ENCODE measurements at regions of chr19 and their contacts with region 1.

Region 1: GRCh38 chr19:7674010-7675005 is 2.6 kb upstream of the MCEMP1 start:
- DNase-seq: peak; percentile 94 to 97 (median 96)
- H3K4me3 ChIP-seq: no peak overlapping the region
- H3K4me3 Mint-ChIP-seq: peak overlapping the region; percentile 26 to 34
- H3K27ac ChIP-seq: peak overlapping the region; percentile 67 to 81
- H3K27ac Mint-ChIP-seq: peak overlapping the region; percentile 70 to 98 (median 93)
- H3K4me1 ChIP-seq: peaks cover 69 to 85% of the 10 kb centered on the region in 2 donors
- H3K4me1 Mint-ChIP-seq: peaks cover 78% of the 10 kb centered on the region
- H3K27me3 ChIP-seq: no peaks in the 10 kb centered on the region
- H3K27me3 Mint-ChIP-seq: peaks cover 0 to 4% (median 0%) of the 10 kb centered on the region in 3 donors
- CTCF ChIP-seq: no peak

Region 2: GRCh38 chr19:7595466-7596133 is 78.7 kb before region 1 on chr19 and contains the start of gene CAMSAP3:
- intact Hi-C with region 1: no loop called
- DNase-seq: no peak
- H3K4me3 ChIP-seq: peak within 1 kb of the TSS in 1 of 3 experiments; percentile 60
- H3K4me3 Mint-ChIP-seq: peak within 1 kb of the TSS; percentile 71 to 82
- H3K27ac ChIP-seq: no peak within 1 kb of the TSS
- H3K27ac Mint-ChIP-seq: peak within 1 kb of the TSS in 1 of 7 donors; percentile 9
- H3K4me1 ChIP-seq: peaks cover 4 to 6% of the 10 kb centered on the region in 2 donors
- H3K4me1 Mint-ChIP-seq: peaks cover 6% of the 10 kb centered on the region
- H3K27me3 ChIP-seq: peaks cover 33 to 51% of the 10 kb centered on the region in 2 donors
- H3K27me3 Mint-ChIP-seq: peaks cover 54 to 66% (median 63%) of the 10 kb centered on the region in 3 donors
- CTCF ChIP-seq: no peak
- polyA plus RNA-seq, gene CAMSAP3: 0.05 TPM in 1 of 3 donors, not detected in the others

Region 3: DNA sequence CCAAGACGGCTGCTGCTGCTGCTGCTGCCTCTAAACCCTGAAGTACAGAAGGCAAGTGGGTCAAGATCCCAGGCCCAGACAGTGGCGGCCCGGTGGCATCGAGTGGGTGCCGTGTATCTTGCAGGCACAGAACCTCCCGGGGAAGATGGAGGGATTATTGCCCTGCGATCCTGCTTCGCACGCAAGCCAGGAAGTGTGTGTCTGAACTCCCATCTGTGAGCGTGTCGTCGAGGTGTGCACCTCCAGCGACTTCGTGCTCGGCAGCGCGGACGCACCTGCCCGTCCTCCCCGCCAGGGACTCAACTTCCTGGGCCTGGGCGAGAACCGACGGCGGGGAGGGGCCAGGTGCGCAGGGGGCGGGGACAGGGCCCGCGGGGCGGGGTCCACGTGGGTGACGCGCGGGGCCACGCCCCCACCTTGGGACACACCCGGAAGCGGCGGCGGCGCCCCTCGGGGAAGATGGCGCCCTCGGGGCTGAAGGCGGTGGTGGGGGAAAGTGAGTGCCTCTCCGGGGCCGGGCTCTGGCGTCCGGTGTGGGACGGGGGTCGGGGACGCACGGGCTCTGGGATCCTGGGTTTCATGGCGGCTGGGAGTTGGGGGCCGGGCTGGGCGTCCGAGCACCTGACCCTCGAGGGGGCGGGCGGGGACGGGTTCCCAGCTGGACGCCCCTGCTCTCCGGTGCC is 37.5 kb before region 1 on chr19 and contains the start of gene STXBP2:
- intact Hi-C with region 1: loop called in 1 of 2 experiments (anchors 5 kb)
- DNase-seq: peak; percentile 73 to 81 (median 74)
- H3K4me3 ChIP-seq: peak within 1 kb of the TSS; percentile 56 to 99 (median 90)
- H3K4me3 Mint-ChIP-seq: peak within 1 kb of the TSS; percentile 89 to 92
- H3K27ac ChIP-seq: peak within 1 kb of the TSS; percentile 96 to 100
- H3K27ac Mint-ChIP-seq: peak within 1 kb of the TSS; percentile 94 to 98 (median 95)
- H3K4me1 ChIP-seq: peaks cover 33 to 42% of the 10 kb centered on the region in 2 donors
- H3K4me1 Mint-ChIP-seq: peaks cover 46% of the 10 kb centered on the region
- H3K27me3 ChIP-seq: no peaks in the 10 kb centered on the region
- H3K27me3 Mint-ChIP-seq: peaks cover 0 to 3% (median 2%) of the 10 kb centered on the region in 3 donors
- CTCF ChIP-seq: no peak
- polyA plus RNA-seq, gene STXBP2: 249 to 846 (median 327) TPM

Region 4: GRCh38 chr19:7658219-7658686 is 16.1 kb before region 1 on chr19:
- intact Hi-C with region 1: loop called (anchors 1 to 2 kb)
- DNase-seq: peak; percentile 72 to 87 (median 82)
- H3K4me3 ChIP-seq: peak overlapping the region in 2 of 3 experiments; percentile 16 to 61
- H3K4me3 Mint-ChIP-seq: peak overlapping the region; percentile 67 to 73
- H3K27ac ChIP-seq: peak overlapping the region; percentile 99 to 100
- H3K27ac Mint-ChIP-seq: peak overlapping the region; percentile 98 to 100 (median 99)
- H3K4me1 ChIP-seq: peaks cover 69 to 74% of the 10 kb centered on the region in 2 donors
- H3K4me1 Mint-ChIP-seq: peaks cover 58% of the 10 kb centered on the region
- H3K27me3 ChIP-seq: no peaks in the 10 kb centered on the region
- H3K27me3 Mint-ChIP-seq: peaks cover 0 to 18% (median 0%) of the 10 kb centered on the region in 3 donors
- CTCF ChIP-seq: no peak

Region 5: DNA sequence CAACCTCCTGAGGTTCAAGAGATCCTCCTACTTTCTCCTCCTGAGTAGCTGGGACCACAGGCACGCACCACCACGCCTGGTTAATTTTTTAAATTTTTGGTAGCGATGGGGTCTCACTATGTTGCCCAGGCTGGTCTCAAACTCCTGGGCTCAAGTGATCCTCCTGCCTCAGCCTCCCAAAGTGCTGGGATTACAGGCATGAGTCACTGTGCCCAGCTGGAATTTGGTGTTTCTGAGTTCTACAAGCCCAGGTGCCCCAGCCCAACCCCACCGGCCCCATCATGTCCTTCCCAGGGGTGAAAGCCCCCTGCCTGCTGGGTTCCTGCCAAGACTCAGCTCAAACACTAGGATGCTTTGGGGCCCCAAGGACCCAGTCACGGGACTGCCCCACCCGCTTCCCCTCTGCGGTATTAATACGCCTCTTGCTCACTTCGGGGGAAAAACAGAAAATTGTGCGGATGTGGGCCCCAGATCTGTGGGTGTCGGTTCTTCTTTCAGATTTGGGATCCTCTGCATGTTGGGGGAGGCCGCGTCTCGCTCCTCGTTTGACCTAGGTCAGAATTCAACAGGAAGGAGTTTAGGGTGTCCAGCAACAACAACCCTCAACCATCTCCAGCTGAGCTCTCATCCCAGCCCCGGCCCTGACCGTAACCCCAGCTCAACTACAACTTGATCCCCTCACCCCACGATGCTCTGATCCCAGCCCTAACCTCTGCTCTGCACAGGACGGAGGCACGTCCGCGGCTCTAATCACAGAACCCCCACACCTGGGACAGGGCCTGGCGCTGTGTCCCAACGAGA is 31.3 kb after region 1 on chr19:
- intact Hi-C with region 1: no loop called
- DNase-seq: peak; percentile 91 to 95 (median 94)
- H3K4me3 ChIP-seq: peak overlapping the region in 1 of 3 experiments; percentile 67
- H3K4me3 Mint-ChIP-seq: peak overlapping the region; percentile 70 to 85
- H3K27ac ChIP-seq: peak overlapping the region; percentile 92 to 98
- H3K27ac Mint-ChIP-seq: peak overlapping the region; percentile 98 to 100 (median 99)
- H3K4me1 ChIP-seq: peaks cover 84 to 88% of the 10 kb centered on the region in 2 donors
- H3K4me1 Mint-ChIP-seq: peaks cover 79% of the 10 kb centered on the region
- H3K27me3 ChIP-seq: no peaks in the 10 kb centered on the region
- H3K27me3 Mint-ChIP-seq: peaks cover 0 to 6% (median 4%) of the 10 kb centered on the region in 3 donors
- CTCF ChIP-seq: no peak

Region 6: GRCh38 chr19:7722231-7722651 is 47.9 kb after region 1 on chr19:
- intact Hi-C with region 1: no loop called
- DNase-seq: no peak
- H3K4me3 ChIP-seq: no peak overlapping the region
- H3K4me3 Mint-ChIP-seq: no peak overlapping the region
- H3K27ac ChIP-seq: no peak overlapping the region
- H3K27ac Mint-ChIP-seq: no peak overlapping the region
- H3K4me1 ChIP-seq: peaks cover 6 to 7% of the 10 kb centered on the region in 2 donors
- H3K4me1 Mint-ChIP-seq: peaks cover 16% of the 10 kb centered on the region
- H3K27me3 ChIP-seq: no peaks in the 10 kb centered on the region
- H3K27me3 Mint-ChIP-seq: peaks cover 0 to 3% (median 1%) of the 10 kb centered on the region in 3 donors
- CTCF ChIP-seq: no peak